ENCODE measurements at regions of chr15 and their contacts with region 1.

Region 1: GRCh38 chr15:37880009-37880834 is 54.2 kb upstream of the TMCO5A start:
- DNase-seq: peak; percentile 18
- H3K4me3 Mint-ChIP-seq: no peak overlapping the region
- H3K27ac Mint-ChIP-seq: no peak overlapping the region
- H3K4me1 Mint-ChIP-seq: no peaks in the 10 kb centered on the region
- H3K27me3 Mint-ChIP-seq: no peaks in the 10 kb centered on the region
- CTCF ChIP-seq: no peak

Region 2: DNA sequence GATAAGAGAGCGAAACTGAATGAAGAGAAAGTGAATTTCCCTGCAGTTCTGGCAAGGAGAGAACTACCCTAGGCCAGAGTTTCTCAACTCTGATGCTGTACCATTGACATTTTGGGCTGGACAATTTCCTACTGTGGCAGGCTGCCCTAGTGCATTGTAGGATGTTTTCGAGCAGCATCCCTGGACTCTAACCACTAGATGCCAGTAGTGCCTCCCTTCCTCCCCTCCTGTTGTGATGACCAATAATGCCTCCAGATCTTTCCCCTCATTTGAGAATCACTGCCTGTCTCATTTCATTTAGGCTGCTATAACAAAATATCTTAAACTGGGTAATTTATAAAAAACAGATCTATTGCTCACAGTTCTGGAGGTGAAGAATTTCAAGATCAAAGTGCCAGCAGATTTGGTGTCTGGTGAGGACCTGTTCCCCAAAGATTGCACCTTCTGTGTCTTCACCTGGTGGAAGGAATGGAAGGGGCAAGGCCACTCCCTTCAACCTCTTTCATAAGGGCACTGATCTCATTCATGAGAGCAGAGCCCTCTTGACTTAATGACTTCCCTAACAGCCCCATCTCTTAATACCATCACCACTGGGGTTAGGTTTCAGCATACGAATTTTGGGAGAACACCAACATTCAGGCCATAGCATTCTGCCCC is 591.0 kb before region 1 on chr15:
- CTCF ChIA-PET with region 1: no interaction called
- intact Hi-C with region 1: loop called (anchors 2 kb)
- DNase-seq: peak; percentile 5
- H3K4me3 Mint-ChIP-seq: no peak overlapping the region
- H3K27ac Mint-ChIP-seq: no peak overlapping the region
- H3K4me1 Mint-ChIP-seq: no peaks in the 10 kb centered on the region
- H3K27me3 Mint-ChIP-seq: no peaks in the 10 kb centered on the region
- CTCF ChIP-seq: no peak

Region 3: DNA sequence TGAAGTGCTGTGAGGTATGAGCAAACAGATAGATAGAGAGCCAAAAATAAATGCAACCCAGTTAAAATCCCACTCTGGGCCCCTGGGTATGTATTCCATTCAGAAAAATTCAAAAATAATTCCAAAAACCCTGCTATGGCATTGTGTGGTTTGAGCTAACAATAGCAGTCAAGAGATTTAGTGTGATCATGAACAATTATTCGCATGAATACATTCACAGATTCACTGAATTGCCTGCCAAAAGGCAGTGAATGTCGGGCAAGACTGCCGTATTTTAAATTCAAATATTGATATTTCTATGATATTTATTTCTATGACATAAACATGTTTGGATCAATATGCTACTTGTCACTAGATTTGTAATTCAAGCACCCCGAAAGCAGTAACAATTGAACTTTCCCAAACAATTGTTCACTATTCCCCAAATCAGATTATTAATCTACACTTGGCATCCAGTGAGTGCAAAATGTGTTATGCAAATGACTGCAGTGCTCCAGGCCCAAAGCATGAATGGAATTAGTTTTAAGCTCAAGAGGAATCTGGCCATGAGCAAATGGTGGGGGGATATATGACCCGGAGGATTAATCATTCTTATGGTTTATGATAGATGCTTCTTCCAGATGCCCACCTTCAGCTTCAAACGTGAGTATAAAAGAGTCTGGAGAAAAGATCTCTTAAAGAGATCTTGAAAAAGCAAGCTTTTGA is 362.9 kb before region 1 on chr15:
- CTCF ChIA-PET with region 1: no interaction called
- intact Hi-C with region 1: no loop called
- DNase-seq: no peak
- H3K4me3 Mint-ChIP-seq: no peak overlapping the region
- H3K27ac Mint-ChIP-seq: no peak overlapping the region
- H3K4me1 Mint-ChIP-seq: no peaks in the 10 kb centered on the region
- H3K27me3 Mint-ChIP-seq: no peaks in the 10 kb centered on the region
- CTCF ChIP-seq: no peak

Region 4: GRCh38 chr15:37550360-37551024 is 329.7 kb before region 1 on chr15:
- CTCF ChIA-PET with region 1: no interaction called
- intact Hi-C with region 1: no loop called
- DNase-seq: no peak
- H3K4me3 Mint-ChIP-seq: no peak overlapping the region
- H3K27ac Mint-ChIP-seq: no peak overlapping the region
- H3K4me1 Mint-ChIP-seq: no peaks in the 10 kb centered on the region
- H3K27me3 Mint-ChIP-seq: no peaks in the 10 kb centered on the region
- CTCF ChIP-seq: no peak

Region 5: DNA sequence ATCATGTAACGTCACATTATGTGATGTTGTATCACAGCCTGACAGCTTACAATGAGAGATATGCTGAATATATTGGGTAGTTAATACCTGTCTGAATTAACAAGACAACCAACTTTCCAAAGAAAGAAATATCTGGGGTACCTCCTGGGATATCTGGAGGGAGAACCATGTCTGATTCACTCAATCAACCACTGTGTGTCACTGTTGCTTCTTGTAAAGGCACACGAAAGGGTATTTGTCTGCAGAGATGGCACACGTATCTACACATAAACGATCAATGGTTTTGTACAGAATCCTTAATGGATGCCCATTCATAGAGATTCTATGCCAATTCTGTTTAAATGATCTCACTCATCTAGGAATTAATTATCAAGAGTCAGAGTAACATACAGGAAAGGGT is 197.9 kb before region 1 on chr15:
- CTCF ChIA-PET with region 1: interaction called, 3 read pairs
- intact Hi-C with region 1: loop called (anchors 1 kb)
- DNase-seq: peak; percentile 13
- H3K4me3 Mint-ChIP-seq: no peak overlapping the region
- H3K27ac Mint-ChIP-seq: no peak overlapping the region
- H3K4me1 Mint-ChIP-seq: no peaks in the 10 kb centered on the region
- H3K27me3 Mint-ChIP-seq: no peaks in the 10 kb centered on the region
- CTCF ChIP-seq: no peak

Region 6: GRCh38 chr15:37764733-37765191 is 115.5 kb before region 1 on chr15:
- CTCF ChIA-PET with region 1: interaction called, 3 read pairs
- intact Hi-C with region 1: loop called (anchors 1 kb)
- DNase-seq: peak; percentile 34
- H3K4me3 Mint-ChIP-seq: no peak overlapping the region
- H3K27ac Mint-ChIP-seq: no peak overlapping the region
- H3K4me1 Mint-ChIP-seq: peaks cover 8% of the 10 kb centered on the region
- H3K27me3 Mint-ChIP-seq: no peaks in the 10 kb centered on the region
- CTCF ChIP-seq: no peak

Region 7: GRCh38 chr15:37907136-37907535 is 26.9 kb after region 1 on chr15:
- CTCF ChIA-PET with region 1: no interaction called
- intact Hi-C with region 1: no loop called
- DNase-seq: peak; percentile 24
- H3K4me3 Mint-ChIP-seq: no peak overlapping the region
- H3K27ac Mint-ChIP-seq: no peak overlapping the region
- H3K4me1 Mint-ChIP-seq: no peaks in the 10 kb centered on the region
- H3K27me3 Mint-ChIP-seq: no peaks in the 10 kb centered on the region
- CTCF ChIP-seq: no peak

Measured in Calu3 (cell line).